ENCODE measurements at regions of chr6 and their contacts with region 1.

Region 1: GRCh38 chr6:111478749-111479148 is 4.3 kb downstream of the REV3L start:
- DNase-seq: no peak
- H3K4me3 ChIP-seq: no peak overlapping the region
- H3K27ac ChIP-seq: no peak overlapping the region
- H3K4me1 ChIP-seq: peaks cover 0 to 12% (median 6%) of the 10 kb centered on the region in 4 experiments; a peak in 4 of 7 replicates
- H3K27me3 ChIP-seq: peaks cover 32 to 74% (median 50%) of the 10 kb centered on the region in 4 experiments
- CTCF ChIP-seq: peak in 2 of 3 experiments; percentile 37 to 51; a peak in 2 of 4 replicates
- EP300 ChIP-seq: peak in 1 of 2 experiments; percentile 74; a peak in 1 of 3 replicates
- POLR2A ChIP-seq: no peak
- RAD21 ChIP-seq: peak; percentile 64 to 69

Region 2: DNA sequence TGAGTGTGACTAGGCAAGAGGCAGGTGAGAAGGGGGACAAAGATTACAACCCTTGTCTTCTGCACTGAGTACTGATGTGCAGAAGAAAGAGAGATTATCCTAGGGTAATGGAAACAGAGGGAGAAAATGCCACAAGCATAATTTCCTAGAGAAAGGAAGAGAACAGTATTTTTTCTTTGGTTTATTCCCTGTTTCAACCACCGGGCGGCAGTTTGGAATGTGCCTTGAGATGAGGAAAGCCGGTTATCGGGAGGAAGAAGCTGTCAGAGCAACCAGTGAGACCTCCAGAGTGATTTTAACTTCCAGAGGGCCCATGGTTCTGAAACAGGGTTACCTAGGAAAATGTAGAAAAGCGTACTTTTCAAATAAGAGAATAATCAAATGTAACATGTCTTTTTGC is 117.1 kb before region 1 on chr6:
- CTCF ChIA-PET with region 1: interaction called, 16 read pairs
- POLR2A ChIA-PET with region 1: no interaction called
- DNase-seq: peak in 1 of 2 experiments; percentile 9
- H3K4me3 ChIP-seq: no peak overlapping the region
- H3K27ac ChIP-seq: no peak overlapping the region
- H3K4me1 ChIP-seq: no peaks in the 10 kb centered on the region
- H3K27me3 ChIP-seq: peaks cover 0 to 1% (median 0%) of the 10 kb centered on the region in 4 experiments; a peak in 1 of 7 replicates
- CTCF ChIP-seq: peak in 2 of 3 experiments; percentile 56 to 59; a peak in 2 of 4 replicates
- EP300 ChIP-seq: no peak
- POLR2A ChIP-seq: no peak
- RAD21 ChIP-seq: peak; percentile 77 to 79

Region 3: GRCh38 chr6:111596784-111597183 is 118.0 kb after region 1 on chr6:
- CTCF ChIA-PET with region 1: no interaction called
- POLR2A ChIA-PET with region 1: no interaction called
- DNase-seq: no peak
- H3K4me3 ChIP-seq: no peak overlapping the region
- H3K27ac ChIP-seq: no peak overlapping the region
- H3K4me1 ChIP-seq: peaks cover 0 to 8% (median 2%) of the 10 kb centered on the region in 4 experiments; a peak in 2 of 7 replicates
- H3K27me3 ChIP-seq: no peaks in the 10 kb centered on the region
- CTCF ChIP-seq: no peak
- EP300 ChIP-seq: no peak
- POLR2A ChIP-seq: no peak
- RAD21 ChIP-seq: no peak